ENCODE measurements at regions of chr11 and their contacts with region 1.

Region 1: DNA sequence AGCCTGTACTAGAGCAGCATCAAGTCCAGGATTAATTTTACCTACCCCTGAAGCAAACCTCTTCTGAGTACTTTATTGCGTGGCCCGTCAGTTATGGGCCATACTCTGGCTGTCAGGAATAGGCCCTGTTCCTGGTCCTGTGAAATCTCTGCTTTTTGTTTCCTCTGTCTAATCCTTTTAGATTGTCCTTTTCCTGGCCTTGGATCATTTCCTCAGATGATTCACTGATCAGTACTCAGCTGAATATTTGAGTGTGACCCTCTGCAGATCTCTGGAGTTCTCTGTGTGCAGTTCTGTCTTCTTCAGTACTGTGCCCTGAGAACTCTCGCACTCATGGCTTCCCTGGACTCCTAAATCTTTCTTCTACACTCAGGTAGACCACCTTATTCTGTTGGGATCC is 123.5 kb downstream of the UVRAG start:
- DNase-seq: peak; percentile 53
- H3K4me3 ChIP-seq: no peak overlapping the region
- H3K27ac ChIP-seq: peak overlapping the region; percentile 10
- H3K4me1 ChIP-seq: peaks cover 18% of the 10 kb centered on the region
- H3K27me3 ChIP-seq: no peaks in the 10 kb centered on the region
- CTCF ChIP-seq: no peak
- POLR2A ChIP-seq: no peak

Region 2: GRCh38 chr11:75513250-75513649 is 425.3 kb before region 1 on chr11:
- CTCF ChIA-PET with region 1: no interaction called
- POLR2A ChIA-PET with region 1: no interaction called
- dilution Hi-C with region 1: no loop called
- intact Hi-C with region 1: no loop called
- DNase-seq: peak; percentile 53
- H3K4me3 ChIP-seq: no peak overlapping the region
- H3K27ac ChIP-seq: no peak overlapping the region
- H3K4me1 ChIP-seq: no peaks in the 10 kb centered on the region
- H3K27me3 ChIP-seq: no peaks in the 10 kb centered on the region
- CTCF ChIP-seq: no peak
- POLR2A ChIP-seq: no peak

Region 3: DNA sequence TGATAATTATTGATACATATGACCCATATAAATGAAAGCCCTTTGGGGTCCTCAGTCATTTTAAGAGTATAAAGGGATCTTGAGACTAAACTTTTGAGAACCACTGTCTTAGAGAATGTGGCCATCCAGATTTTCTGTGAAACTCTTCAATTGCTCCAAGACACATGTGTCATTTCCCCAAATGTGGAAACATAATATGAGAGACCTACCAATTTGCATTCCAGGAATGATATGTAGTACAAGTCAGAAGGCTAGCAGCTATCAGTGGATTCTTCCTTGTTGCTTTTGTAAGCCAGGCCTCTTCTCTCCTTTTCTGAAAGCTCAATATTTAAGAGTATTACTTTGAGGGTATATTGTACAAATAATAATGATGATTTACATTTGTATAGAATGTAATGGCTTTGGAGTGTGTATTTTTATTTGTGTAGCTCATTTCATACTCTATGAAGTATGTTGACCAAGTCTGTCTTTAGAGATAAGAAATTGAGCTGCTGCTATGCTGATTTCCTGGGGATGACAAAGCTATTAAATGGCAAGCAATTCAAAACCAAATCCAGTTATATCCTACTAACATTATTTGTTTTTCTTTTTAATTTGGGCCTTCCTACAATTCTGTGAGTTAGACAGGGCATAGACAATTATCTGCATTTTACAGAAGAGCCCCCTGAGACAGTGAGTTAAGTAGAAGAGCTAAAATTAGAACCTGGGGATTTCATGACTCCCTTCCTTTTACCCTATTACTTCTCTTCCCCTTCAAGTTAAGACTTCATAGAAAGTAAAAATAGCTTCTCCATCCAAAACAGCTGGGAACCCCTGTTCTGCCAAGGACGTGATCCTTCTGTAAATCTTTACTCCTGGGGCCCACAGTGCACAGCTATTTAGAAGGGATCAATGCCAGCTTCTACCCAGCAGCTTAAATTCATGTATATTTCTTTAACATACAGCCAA is 135.9 kb after region 1 on chr11:
- CTCF ChIA-PET with region 1: no interaction called
- POLR2A ChIA-PET with region 1: no interaction called
- dilution Hi-C with region 1: no loop called
- intact Hi-C with region 1: loop called (anchors 5 kb)
- DNase-seq: peak; percentile 75
- H3K4me3 ChIP-seq: no peak overlapping the region
- H3K27ac ChIP-seq: peak overlapping the region; percentile 44
- H3K4me1 ChIP-seq: peaks cover 35% of the 10 kb centered on the region
- H3K27me3 ChIP-seq: no peaks in the 10 kb centered on the region
- CTCF ChIP-seq: no peak
- POLR2A ChIP-seq: no peak

Measured in endothelial cell of umbilical vein (primary cell).